PC-9 (cell line): ENCODE measurements at regions of chr9 and their contacts with region 1.

Region 1: DNA sequence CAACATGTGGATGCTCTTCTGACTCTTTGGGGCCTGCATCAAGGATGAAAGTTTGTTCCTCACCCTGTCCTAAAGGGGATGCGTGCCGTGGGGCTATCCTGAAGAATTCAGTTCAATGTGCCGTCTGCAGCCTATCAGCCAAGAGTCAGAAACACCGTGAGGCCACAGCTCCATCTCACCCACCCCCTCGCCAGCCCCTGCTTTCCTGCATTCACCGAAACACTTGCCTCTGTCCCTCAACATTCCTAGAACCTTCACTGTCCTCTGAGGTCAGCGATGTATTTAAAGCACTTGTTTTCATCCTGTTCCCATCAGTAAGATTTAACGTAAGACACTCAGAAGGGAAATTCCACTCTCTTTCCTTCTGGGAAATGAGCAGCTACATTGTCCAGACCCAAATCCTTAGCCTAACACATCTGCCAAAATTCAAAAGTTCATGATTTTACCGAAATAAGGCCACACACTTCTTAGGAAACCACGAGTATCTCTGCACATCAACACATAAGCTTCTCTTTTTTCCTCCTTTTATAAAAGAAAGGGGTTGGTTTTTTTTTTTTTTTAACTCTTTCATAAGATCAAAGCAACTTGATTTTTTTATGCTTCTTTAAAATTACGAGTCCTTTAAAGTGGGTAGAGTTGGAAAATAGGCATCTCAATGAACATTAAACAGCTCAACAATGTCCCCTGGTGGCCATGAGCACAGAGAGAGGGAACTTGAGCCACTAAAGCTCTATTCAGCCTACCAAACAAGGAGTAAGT is 100.7 kb downstream of the SUSD1 start:
- DNase-seq: peak; percentile 62 to 78
- H3K4me3 ChIP-seq: no peak overlapping the region
- H3K27ac ChIP-seq: peak overlapping the region; percentile 50
- H3K4me1 ChIP-seq: peaks cover 23% of the 10 kb centered on the region
- H3K27me3 ChIP-seq: no peaks in the 10 kb centered on the region
- CTCF ChIP-seq: peak; percentile 94

Region 2: GRCh38 chr9:111631071-111631971 is 443.1 kb before region 1 on chr9 and contains the start of gene DNAJC25:
- CTCF ChIA-PET with region 1: interaction called, 12 read pairs
- POLR2A ChIA-PET with region 1: no interaction called
- intact Hi-C with region 1: no loop called
- DNase-seq: peak; percentile 97 to 99
- H3K4me3 ChIP-seq: peak within 1 kb of the TSS; percentile 73
- H3K27ac ChIP-seq: peak within 1 kb of the TSS; percentile 63
- H3K4me1 ChIP-seq: peaks cover 23% of the 10 kb centered on the region
- H3K27me3 ChIP-seq: no peaks in the 10 kb centered on the region
- CTCF ChIP-seq: no peak
- total RNA-seq, gene DNAJC25: 7.3 and 7.9 TPM in 2 replicates

Region 3: DNA sequence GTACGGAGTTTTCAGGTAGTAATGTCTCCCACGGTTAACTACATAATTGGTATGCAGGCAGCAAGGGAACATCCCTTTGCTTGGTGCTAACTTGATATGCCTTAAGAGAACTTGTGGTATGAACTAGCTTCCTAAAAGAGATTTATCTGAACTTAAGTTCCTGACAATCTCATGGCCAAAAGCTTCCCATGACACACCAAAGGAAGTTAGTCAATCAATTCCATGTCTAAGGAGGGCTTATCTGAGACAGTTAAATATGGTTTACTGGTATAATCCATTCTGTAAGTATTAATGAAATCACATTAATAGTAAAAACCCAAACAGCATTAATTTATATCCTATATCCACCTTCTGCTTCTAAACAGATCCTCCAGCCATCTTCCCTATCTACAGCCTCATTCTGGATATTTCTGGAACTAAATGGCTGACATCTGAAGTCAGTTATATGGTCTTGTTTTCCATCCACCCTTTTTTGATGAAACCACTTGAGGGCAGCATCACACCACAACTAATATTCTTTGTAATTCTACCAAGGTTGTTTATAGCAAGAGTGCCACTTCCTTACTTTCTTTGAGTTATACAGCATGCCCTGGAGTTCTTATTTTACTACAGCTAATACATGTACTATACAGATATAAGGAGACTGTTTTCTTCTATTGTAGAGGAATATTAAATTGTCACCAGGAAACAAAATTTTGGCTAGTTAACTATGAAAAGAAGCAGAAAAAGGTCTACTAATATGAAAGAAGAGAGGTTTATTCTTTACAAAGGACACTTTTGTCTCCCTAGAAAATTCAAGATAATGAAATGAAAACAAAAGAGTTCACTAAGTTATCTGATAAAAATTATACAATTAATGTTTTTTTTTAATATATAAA is 314.4 kb before region 1 on chr9:
- CTCF ChIA-PET with region 1: interaction called, 16 read pairs
- POLR2A ChIA-PET with region 1: no interaction called
- intact Hi-C with region 1: loop called (anchors 1 kb)
- DNase-seq: peak; percentile 53 to 73
- H3K4me3 ChIP-seq: no peak overlapping the region
- H3K27ac ChIP-seq: no peak overlapping the region
- H3K4me1 ChIP-seq: peaks cover 6% of the 10 kb centered on the region; the same call in 1 of the 2 replicates
- H3K27me3 ChIP-seq: no peaks in the 10 kb centered on the region
- CTCF ChIP-seq: peak; percentile 81

Region 4: DNA sequence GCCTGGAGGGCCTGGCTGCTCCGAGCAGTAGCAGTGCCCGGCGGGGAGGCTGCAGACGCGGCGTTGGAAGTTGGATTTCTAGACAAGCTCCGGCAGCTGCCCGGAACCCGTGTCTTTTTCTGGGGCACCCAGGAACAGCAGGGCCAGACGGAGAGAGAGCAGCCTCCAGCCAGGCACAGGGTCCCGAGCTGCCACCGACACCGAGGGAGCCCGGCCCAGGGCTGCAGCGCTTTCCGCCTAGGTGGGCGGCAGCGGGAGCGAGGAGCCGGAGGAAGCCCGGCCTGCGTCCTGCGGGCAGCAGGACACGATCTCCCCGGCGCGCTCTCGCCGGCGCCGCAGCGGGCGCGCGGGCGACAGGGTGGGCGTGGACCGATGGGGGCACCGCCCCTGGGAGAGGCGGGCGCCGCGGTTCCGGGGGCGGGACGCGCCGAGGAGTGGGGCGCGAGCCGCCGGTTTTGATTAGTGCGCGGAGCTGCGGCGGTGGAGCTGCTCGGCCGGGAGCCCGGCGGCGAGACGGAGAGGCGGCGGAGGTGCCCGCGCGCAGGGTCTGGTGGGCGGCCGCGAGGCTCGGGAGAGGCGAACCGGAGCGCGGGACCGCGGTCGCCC is 178.0 kb before region 1 on chr9 and contains the start of gene UGCG:
- CTCF ChIA-PET with region 1: interaction called, 8 read pairs
- POLR2A ChIA-PET with region 1: interaction called, 6 read pairs
- intact Hi-C with region 1: loop called (anchors 1 kb)
- DNase-seq: peak; percentile 68 to 96
- H3K4me3 ChIP-seq: peak within 1 kb of the TSS; percentile 76
- H3K27ac ChIP-seq: peak within 1 kb of the TSS; percentile 83
- H3K4me1 ChIP-seq: peaks cover 59% of the 10 kb centered on the region
- H3K27me3 ChIP-seq: no peaks in the 10 kb centered on the region
- CTCF ChIP-seq: no peak
- total RNA-seq, gene UGCG: 79.8 and 88.7 TPM in 2 replicates

Region 5: GRCh38 chr9:111937781-111938426 is 136.5 kb before region 1 on chr9:
- CTCF ChIA-PET with region 1: interaction called, 9 read pairs
- POLR2A ChIA-PET with region 1: interaction called, 7 read pairs
- intact Hi-C with region 1: loop called (anchors 5 kb)
- DNase-seq: no peak
- H3K4me3 ChIP-seq: no peak overlapping the region
- H3K27ac ChIP-seq: no peak overlapping the region
- H3K4me1 ChIP-seq: no peaks in the 10 kb centered on the region
- H3K27me3 ChIP-seq: no peaks in the 10 kb centered on the region
- CTCF ChIP-seq: no peak

Region 6: DNA sequence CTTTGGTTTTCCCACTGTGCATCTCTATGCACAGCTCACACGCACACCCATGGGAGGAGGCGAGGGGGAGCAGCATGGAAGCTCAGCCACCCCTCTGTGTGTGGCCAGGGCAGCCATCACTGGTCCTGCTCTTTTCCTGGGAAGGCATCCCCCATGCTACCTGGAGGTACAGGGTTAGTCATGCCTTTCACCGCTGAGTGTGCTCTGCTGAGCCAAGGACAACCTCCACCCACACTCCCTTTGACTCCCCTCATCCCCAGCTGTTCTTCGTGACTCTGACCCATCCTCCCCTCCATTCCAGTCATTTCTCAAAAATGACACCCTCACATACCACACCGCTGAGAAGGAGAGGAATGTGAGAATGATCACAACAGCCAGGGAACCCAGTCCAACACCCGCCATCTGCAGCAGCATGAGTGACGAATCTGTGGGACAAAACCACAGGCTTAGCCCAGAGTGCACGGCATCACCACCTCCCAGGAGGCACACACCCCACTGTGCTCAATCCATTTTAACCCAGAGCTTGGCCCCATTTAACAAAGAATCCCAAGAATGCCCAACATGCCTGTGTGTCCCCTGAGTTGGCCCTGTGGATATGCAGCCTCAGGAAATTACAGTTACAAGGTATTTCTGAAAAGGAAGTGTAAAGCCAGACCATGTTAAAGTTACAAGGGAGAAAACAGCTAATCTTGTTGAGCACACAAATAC is 32.7 kb before region 1 on chr9:
- CTCF ChIA-PET with region 1: interaction called, 10 read pairs
- POLR2A ChIA-PET with region 1: no interaction called
- intact Hi-C with region 1: loop called (anchors 1 kb)
- DNase-seq: peak; percentile 96 to 99
- H3K4me3 ChIP-seq: no peak overlapping the region
- H3K27ac ChIP-seq: peak overlapping the region; percentile 83
- H3K4me1 ChIP-seq: peaks cover 60% of the 10 kb centered on the region
- H3K27me3 ChIP-seq: no peaks in the 10 kb centered on the region
- CTCF ChIP-seq: no peak